ENCODE measurements at regions of chr1 and their contacts with region 1.

Region 1: GRCh38 chr1:115138968-115139367 is 49.7 kb upstream of the TSPAN2 start:
- DNase-seq: peak; percentile 41 to 54 (median 48)
- H3K4me3 ChIP-seq: no peak overlapping the region
- H3K4me3 Mint-ChIP-seq: peak overlapping the region in 1 of 2 donors; percentile 68
- H3K27ac ChIP-seq: no peak overlapping the region
- H3K27ac Mint-ChIP-seq: peak overlapping the region in 1 of 7 donors; percentile 21
- H3K4me1 ChIP-seq: no peaks in the 10 kb centered on the region
- H3K4me1 Mint-ChIP-seq: peaks cover 4% of the 10 kb centered on the region
- H3K27me3 ChIP-seq: no peaks in the 10 kb centered on the region
- H3K27me3 Mint-ChIP-seq: peaks cover 4 to 11% (median 4%) of the 10 kb centered on the region in 3 donors
- CTCF ChIP-seq: peak; percentile 91

Region 2: GRCh38 chr1:115595279-115596079 is 456.5 kb after region 1 on chr1:
- intact Hi-C with region 1: loop called (anchors 5 kb)
- DNase-seq: peak; percentile 15 to 44 (median 31)
- H3K4me3 ChIP-seq: no peak overlapping the region
- H3K4me3 Mint-ChIP-seq: no peak overlapping the region
- H3K27ac ChIP-seq: no peak overlapping the region
- H3K27ac Mint-ChIP-seq: no peak overlapping the region
- H3K4me1 ChIP-seq: no peaks in the 10 kb centered on the region
- H3K4me1 Mint-ChIP-seq: no peaks in the 10 kb centered on the region
- H3K27me3 ChIP-seq: no peaks in the 10 kb centered on the region
- H3K27me3 Mint-ChIP-seq: peaks cover 2 to 7% (median 2%) of the 10 kb centered on the region in 3 donors
- CTCF ChIP-seq: peak; percentile 86